Activated naive CD4-positive, alpha-beta T cell treated with anti-CD3 and anti-CD28 coated beads for 36 hours (primary cell): ENCODE measurements at regions of chr2 and their contacts with region 1.

Region 1: DNA sequence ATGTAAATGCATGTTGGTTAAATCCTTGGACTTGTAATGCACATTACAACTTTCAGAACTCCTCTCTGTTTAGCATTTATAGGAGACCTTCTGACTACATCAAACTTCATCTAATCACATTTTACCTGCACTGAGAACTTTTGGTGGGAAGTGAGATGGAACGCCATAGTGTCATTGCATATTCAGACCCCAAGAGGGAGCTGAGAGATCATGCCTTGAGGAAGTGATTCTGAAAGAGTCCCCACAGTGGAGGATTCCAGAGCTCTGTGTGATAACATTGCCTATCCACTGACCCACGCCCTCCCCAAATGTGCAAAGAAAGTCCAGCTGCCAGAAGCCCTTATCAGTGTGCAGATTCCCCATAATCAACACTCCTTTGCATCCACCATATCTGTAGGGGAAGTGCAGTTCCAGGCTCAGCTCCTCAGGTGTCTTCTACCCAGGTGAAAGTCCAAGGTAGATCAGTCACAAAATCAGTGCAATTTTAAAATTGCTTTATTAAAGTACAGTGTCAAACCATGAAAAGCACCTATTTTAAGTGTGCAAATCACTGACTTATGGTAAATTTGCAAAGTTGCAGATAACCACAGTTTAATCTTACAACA is 212.4 kb downstream of the RPIA start:
- DNase-seq: peak; percentile 17
- H3K4me3 Mint-ChIP-seq: no peak overlapping the region
- H3K27ac Mint-ChIP-seq: no peak overlapping the region
- H3K4me1 Mint-ChIP-seq: no peaks in the 10 kb centered on the region
- H3K27me3 Mint-ChIP-seq: peaks cover 15% of the 10 kb centered on the region

Region 2: DNA sequence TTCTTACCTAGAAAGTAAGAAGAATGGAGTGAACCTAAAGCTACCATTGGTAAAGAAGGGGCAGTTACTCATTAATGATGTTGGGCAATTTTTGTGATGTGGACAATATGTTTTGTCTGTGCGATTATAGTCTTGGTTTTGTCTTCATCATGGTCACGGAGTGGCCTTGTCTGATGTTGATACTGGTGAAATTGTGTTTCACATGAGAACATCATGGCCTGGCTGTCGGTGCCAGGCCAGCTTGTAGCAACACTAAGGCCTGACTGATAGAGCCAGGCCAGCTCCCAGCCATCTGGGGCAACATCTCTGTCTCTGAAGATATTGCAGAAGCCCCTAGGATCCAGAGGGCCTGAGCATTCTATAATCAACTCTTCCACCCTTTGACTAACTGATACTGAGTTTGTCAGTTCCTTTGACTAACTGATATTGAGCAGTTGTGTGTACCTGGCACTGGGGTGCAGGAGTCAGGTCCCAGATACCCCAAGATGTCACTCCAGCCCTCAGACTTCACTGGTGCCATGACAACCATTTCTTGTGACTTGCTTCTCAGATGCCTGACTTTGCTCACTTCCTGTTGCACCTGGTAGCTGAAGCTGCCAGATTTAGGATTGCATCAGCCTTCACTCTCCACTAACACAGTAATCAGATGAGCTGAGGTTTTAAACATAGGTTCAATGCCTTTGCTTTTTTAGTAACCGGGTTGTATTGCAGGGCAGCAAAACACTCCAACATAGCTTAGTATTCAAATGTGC is 149.8 kb before region 1 on chr2:
- CTCF ChIA-PET with region 1: no interaction called
- intact Hi-C with region 1: no loop called
- DNase-seq: peak; percentile 79
- H3K4me3 Mint-ChIP-seq: no peak overlapping the region
- H3K27ac Mint-ChIP-seq: peak overlapping the region; percentile 98
- H3K4me1 Mint-ChIP-seq: peaks cover 57% of the 10 kb centered on the region
- H3K27me3 Mint-ChIP-seq: no peaks in the 10 kb centered on the region

Region 3: GRCh38 chr2:88838165-88838635 is 65.7 kb before region 1 on chr2:
- CTCF ChIA-PET with region 1: no interaction called
- intact Hi-C with region 1: no loop called
- DNase-seq: peak; percentile 38
- H3K4me3 Mint-ChIP-seq: no peak overlapping the region
- H3K27ac Mint-ChIP-seq: no peak overlapping the region
- H3K4me1 Mint-ChIP-seq: no peaks in the 10 kb centered on the region
- H3K27me3 Mint-ChIP-seq: no peaks in the 10 kb centered on the region

Region 4: DNA sequence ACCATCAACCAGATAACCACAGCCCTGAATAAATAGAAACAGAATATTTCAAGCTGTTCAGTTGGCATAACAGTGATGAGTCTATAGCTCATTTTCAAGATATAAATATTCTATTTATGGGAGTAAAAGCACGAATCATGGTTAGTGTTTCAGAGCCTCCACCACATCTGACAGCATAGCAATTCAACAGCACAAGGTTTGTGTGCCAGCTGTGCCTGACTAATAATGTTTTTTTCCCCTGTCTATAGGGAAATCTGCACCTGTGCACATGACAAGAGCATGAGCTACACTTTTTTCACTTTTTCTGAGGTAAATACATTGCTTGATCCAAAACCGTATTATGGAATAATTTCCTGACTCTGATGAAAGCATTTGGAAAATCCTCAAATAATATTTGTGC is 38.9 kb after region 1 on chr2:
- CTCF ChIA-PET with region 1: interaction called, 4 read pairs
- intact Hi-C with region 1: loop called (anchors 5 kb)
- DNase-seq: no peak
- H3K4me3 Mint-ChIP-seq: no peak overlapping the region
- H3K27ac Mint-ChIP-seq: no peak overlapping the region
- H3K4me1 Mint-ChIP-seq: no peaks in the 10 kb centered on the region
- H3K27me3 Mint-ChIP-seq: peaks cover 7% of the 10 kb centered on the region